ENCODE measurements at regions of chr1 and their contacts with region 1.

Region 1: DNA sequence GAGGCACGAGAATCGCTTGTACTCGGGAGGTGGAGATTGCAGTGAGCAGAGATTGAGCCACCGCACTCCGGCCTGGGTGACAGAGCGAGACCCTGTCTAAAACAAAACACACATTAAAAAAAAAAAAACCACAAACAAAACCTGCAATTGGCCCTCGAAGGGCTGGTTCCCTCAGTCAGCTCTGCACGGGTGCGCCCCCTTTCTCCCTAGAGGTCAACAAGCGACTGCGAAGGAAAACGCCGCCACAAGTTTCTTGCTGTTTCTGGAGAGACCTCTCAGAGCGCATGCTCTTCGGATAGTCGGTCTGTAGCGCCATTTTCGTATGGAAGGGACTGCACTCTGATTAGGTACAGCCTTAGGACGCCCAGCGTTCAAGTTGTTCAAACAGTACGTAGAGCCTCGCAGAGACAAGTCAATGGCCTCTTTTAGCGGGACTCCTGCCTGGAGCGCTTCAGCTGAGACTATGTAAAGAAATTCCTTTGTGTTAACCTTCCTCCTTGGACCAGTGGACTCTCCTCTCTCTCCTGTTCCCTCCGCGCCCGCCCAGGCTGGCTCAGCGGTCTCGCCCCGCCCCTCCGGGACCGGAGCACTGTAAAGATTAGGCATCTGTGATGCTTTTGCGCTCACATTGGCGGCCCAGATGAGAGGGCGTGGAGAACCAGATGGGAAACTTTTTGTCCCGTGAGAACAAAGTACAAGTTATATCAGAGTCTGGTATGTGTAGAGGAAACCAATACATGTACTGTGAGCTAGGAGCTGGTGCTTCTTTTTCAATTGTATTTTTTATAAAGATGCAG is 1.0 kb upstream of the CDC14A start:
- DNase-seq: peak; percentile 94
- ATAC-seq: peak; percentile 81

Region 2: GRCh38 chr1:100265931-100266740 is 85.2 kb before region 1 on chr1 and contains the start of gene RTCA:
- intact Hi-C with region 1: loop called (anchors 5 kb)
- DNase-seq: peak; percentile 100
- ATAC-seq: peak; percentile 99
- total RNA-seq, gene RTCA: 46.2 TPM

Region 3: DNA sequence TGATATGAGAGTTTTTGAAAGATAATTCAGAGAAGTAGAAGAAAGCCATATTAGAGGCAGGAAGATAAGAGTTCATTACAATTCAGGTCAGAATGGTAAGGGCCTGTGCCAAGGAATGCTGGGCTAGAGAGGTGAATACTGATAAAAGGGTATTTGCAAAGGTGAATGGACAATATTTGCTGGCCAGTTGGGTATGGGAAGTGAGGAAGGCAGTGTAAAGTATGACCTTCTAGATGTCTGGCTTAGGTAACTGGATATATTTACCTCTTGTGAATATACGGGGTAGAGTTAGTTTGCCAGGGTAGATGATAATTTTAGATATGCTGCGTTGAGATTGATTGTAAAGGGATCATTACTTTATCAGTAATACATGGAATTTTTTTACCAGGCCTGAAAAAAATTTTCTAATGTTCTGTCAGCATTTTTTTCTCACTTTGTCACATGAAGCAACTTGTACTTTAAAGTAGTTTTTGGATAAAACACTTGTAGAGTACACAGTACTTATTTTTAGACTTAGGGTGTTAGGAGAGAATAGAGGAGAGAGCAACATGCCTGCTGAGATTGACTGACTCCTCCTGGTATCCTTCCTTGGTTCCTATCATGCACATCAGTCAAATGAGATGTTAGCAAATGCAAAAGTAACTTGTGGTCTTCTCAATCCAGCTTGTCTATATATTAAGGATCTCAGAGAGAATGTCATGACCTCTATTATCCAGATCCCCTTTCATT is 71.2 kb before region 1 on chr1:
- intact Hi-C with region 1: loop called (anchors 5 kb)
- DNase-seq: no peak
- ATAC-seq: peak; percentile 83

Region 4: DNA sequence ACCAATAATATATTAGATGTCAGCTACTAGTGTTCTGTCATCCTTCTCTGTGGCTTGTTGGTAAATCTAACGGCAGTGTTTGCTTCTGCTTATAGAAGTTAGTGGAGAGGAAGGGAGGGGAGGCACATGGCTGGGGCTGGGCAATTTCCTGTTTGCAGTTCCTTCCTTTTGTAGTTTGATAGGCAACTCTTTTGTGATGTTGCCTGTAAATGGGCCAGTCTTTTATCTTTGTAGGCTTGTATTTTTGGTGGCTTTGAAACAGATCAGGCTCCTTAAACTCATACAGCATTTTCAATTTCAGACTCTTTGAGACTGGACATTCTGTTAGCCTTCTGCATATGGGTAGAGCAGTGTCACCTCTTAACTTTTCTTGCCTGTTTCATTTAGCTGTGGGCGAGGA is 49.1 kb after region 1 on chr1:
- intact Hi-C with region 1: loop called (anchors 5 kb)
- DNase-seq: peak; percentile 61
- ATAC-seq: peak; percentile 71

Region 5: GRCh38 chr1:100443811-100444571 is 92.7 kb after region 1 on chr1:
- intact Hi-C with region 1: loop called (anchors 5 kb)
- DNase-seq: no peak
- ATAC-seq: no peak

Region 6: DNA sequence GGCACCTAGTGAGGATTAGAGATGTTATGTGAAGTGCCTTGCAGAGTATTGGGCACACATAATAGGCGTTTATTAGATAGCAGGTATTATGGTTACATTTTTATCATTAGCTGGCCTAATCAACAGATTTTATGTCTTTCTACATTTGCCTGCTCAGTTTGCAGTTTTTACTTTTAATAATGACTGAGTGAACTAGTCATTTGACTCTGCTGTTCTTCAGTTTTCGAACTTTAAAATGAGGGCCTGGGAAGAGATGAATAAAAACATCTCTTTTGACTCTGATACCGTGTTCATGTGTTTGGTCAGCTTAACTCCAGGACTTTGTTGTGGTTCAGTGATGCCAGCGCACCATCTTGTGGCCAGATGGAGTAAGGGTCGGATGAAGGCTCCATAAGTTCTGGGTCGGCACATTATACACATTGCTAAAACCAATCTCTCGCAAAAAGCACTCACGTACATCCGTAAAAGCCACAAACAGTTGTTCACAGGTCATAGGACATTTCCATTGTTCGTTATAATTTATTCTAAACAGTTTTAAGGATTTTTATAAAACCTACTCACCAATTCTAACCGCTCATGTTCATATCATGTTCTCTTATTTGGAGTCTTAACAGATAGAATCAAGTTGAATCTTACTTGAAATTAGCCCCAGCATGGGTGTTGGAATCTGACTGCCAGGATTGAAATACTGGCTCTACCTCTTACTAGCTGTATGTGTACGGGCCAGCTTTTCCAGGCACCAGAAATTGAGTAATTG is 108.2 kb after region 1 on chr1:
- intact Hi-C with region 1: loop called (anchors 5 kb)
- DNase-seq: no peak
- ATAC-seq: peak; percentile 85